H1 (cell line): ENCODE measurements at regions of chr16 and their contacts with region 1.

Region 1: DNA sequence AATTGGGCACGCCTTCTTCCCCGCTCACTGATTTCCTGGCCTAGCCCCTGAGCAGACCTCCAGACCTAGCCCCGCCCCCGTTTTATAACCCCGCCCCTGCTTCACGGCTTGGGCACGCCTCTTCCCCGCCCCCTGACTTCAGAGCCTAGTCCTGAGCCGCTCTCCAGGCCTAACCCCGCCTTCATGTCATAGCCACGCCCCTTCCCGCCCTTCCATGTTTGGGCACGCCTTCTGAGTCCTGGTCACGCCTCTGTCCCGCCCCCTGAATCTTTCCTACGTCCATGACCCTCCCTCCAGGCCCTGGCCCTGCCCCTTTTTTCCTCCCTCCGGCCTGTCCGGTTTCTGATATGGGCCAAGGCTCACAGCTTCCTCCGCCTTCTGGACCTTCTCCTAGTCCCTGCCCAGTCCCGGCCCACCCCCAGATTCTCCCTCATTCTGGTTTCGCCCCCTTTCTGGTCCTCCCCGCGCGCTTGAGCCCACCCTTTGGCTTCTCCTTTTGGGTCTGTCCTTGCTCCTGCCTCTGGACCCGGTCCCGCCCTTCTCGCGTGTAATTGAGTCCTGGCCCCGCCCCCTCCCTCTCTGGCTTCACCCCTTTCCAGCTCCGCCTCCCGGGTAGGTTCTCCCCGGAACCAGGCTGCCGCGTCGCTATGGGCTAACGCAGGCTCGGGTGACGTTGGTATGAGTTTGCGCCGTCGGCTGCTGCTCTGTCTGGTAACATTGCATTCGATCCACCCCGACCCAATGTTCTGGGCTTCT is 15.1 kb upstream of the EEF2K start:
- DNase-seq: peak; percentile 99 to 100
- H3K4me3 ChIP-seq: peak overlapping the region; percentile 66 to 81 (median 74)
- H3K27ac ChIP-seq: peak overlapping the region; percentile 74; the same call in 1 of the 2 replicates
- H3K4me1 ChIP-seq: peaks cover 4 to 14% (median 10%) of the 10 kb centered on the region in 4 experiments; a peak in 6 of 7 replicates
- H3K27me3 ChIP-seq: peaks cover 0 to 6% (median 2%) of the 10 kb centered on the region in 4 experiments; a peak in 4 of 7 replicates
- CTCF ChIP-seq: no peak
- EP300 ChIP-seq: no peak
- POLR2A ChIP-seq: peak in 1 of 2 experiments; percentile 47; a peak in 2 of 3 replicates
- RAD21 ChIP-seq: no peak

Region 2: DNA sequence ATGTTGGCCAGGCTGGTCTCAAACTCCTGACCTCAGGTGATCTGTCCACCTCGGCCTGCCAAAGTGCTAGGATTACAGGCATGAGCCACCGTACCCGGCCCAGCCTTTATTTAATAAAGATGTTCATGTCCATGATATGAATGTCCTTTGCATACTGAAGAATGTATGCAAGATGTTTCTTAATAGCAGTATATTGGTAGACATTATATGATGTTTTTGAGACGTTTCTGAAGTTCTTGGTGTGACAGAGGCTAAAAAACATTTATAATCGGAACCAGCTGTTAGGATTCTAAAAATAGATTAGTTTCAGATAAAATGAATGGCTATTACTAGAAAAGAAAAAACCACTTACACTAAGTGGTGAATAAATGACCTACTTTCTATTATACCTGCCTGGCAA is 201.8 kb before region 1 on chr16:
- CTCF ChIA-PET with region 1: interaction called, 18 read pairs
- POLR2A ChIA-PET with region 1: interaction called, 3 read pairs
- DNase-seq: no peak
- H3K4me3 ChIP-seq: no peak overlapping the region
- H3K27ac ChIP-seq: no peak overlapping the region
- H3K4me1 ChIP-seq: peaks cover 0 to 2% (median 0%) of the 10 kb centered on the region in 4 experiments; a peak in 1 of 7 replicates
- H3K27me3 ChIP-seq: no peaks in the 10 kb centered on the region
- CTCF ChIP-seq: no peak
- EP300 ChIP-seq: no peak
- POLR2A ChIP-seq: no peak
- RAD21 ChIP-seq: no peak

Region 3: DNA sequence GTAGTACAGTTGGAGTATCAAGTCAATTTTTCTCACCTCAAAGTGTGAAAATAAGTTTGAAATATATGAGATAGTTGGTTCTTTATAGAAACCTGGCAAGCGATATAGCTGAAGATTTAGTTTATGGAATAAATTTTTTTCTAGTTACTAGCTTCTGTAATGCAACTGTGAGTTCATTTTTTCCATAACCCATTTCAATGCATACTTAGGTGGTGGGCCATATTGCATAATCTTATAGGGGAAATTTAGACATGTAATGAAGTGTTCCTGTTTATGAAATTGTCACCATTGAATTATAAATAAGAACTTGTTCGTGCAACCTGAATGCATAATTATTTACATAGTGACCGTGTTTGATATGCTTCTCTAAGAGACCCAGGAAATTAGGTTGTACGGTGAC is 174.0 kb before region 1 on chr16:
- CTCF ChIA-PET with region 1: interaction called, 10 read pairs
- POLR2A ChIA-PET with region 1: no interaction called
- DNase-seq: no peak
- H3K4me3 ChIP-seq: no peak overlapping the region
- H3K27ac ChIP-seq: no peak overlapping the region
- H3K4me1 ChIP-seq: no peaks in the 10 kb centered on the region
- H3K27me3 ChIP-seq: no peaks in the 10 kb centered on the region
- CTCF ChIP-seq: no peak
- EP300 ChIP-seq: no peak
- POLR2A ChIP-seq: no peak
- RAD21 ChIP-seq: no peak

Region 4: GRCh38 chr16:22098405-22099255 is 92.3 kb before region 1 on chr16:
- CTCF ChIA-PET with region 1: interaction called, 58 read pairs
- POLR2A ChIA-PET with region 1: interaction called, 4 read pairs
- DNase-seq: no peak
- H3K4me3 ChIP-seq: no peak overlapping the region
- H3K27ac ChIP-seq: no peak overlapping the region
- H3K4me1 ChIP-seq: peaks cover 2 to 7% (median 4%) of the 10 kb centered on the region in 4 experiments; a peak in 4 of 7 replicates
- H3K27me3 ChIP-seq: no peaks in the 10 kb centered on the region
- CTCF ChIP-seq: peak in 2 of 3 experiments; percentile 81 to 82; a peak in 3 of 4 replicates
- EP300 ChIP-seq: no peak
- POLR2A ChIP-seq: no peak
- RAD21 ChIP-seq: peak; percentile 77 to 80

Region 5: DNA sequence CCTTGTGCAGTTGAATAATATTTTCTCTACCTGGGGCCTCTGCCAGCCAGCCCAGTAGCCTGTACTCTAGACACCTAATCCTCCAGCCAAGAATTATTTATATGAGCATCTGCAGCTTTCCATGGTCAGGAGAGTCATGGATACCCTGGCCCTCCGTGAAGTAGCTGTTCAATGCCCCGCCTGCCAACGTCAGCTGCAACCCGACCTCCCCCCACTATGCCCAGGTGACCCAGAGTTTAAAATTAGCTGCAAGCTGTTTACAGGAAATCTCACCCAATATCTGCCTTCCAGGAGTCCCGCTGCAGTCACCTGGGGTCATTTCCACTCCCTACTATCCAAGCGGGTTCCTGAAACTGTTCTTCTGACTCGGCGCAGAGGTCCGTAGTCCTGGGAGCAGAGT is 16.3 kb before region 1 on chr16:
- CTCF ChIA-PET with region 1: interaction called, 18 read pairs
- POLR2A ChIA-PET with region 1: interaction called, 4 read pairs
- DNase-seq: no peak
- H3K4me3 ChIP-seq: no peak overlapping the region
- H3K27ac ChIP-seq: no peak overlapping the region
- H3K4me1 ChIP-seq: no peaks in the 10 kb centered on the region
- H3K27me3 ChIP-seq: no peaks in the 10 kb centered on the region
- CTCF ChIP-seq: no peak
- EP300 ChIP-seq: no peak
- POLR2A ChIP-seq: no peak
- RAD21 ChIP-seq: no peak